ENCODE measurements at regions of chr3 and their contacts with region 1.

Region 1: DNA sequence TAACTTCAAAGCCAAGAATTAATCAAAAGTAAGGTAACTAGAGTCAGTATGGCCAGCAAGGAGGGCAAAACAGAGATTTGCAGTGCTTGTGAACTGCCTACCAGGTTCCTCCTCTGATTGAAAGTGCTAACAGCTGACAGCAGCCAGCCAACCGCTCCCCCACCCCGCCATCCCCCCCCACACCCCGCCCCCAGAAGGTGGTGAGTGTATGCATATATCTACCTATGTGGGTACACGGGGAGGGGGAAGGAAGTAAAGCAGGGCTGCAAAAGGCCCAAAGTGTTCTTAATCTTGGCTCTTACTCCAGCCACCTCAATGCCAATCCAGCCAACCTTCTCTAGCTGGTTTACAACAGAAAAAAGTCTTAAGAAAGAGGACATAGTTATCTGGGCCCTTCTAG is 50.7 kb downstream of the RAF1 start:
- DNase-seq: peak in 3 of 14 experiments; percentile 14 to 43 (median 15)
- ATAC-seq: peak; percentile 71
- H3K4me3 ChIP-seq: no peak overlapping the region
- H3K4me3 Mint-ChIP-seq: no peak overlapping the region
- H3K27ac ChIP-seq: no peak overlapping the region
- H3K27ac Mint-ChIP-seq: peak overlapping the region; percentile 27
- H3K4me1 ChIP-seq: no peaks in the 10 kb centered on the region
- H3K4me1 Mint-ChIP-seq: peaks cover 55% of the 10 kb centered on the region
- H3K27me3 ChIP-seq: no peaks in the 10 kb centered on the region
- H3K27me3 Mint-ChIP-seq: no peaks in the 10 kb centered on the region
- CTCF ChIP-seq: no peak

Region 2: DNA sequence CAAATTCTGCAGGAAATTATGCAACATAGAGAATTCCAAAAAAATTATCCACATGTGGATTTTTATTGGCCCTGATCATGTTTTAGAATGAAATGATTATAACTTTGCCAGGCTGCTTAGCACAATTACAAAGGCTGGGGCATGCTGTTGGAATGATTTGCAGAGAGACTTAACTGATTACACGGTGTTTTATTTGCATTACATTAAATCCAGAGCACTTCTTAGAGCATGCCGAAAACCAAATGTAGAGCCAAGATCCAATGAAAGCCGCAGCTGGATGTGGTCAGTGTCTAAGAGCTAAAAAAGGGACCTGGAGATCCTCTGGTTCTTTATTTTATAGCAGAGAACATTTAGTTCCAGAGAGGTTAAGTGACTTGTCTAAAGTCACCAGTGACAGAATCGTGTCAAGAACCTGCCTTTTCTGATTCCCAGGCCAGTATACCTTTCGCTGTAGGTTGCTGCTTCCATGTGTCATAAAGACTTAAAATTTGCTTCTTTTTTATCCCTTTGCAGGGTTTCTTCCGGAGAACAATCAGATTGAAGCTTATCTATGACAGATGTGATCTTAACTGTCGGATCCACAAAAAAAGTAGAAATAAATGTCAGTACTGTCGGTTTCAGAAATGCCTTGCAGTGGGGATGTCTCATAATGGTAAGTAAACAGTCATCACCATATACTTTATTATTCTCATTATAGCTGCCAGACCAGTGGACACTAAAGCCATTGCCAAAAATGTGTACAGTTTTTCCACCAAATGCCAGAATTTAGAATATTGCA is 221.0 kb before region 1 on chr3:
- CTCF ChIA-PET with region 1: no interaction called
- POLR2A ChIA-PET with region 1: no interaction called
- intact Hi-C with region 1: no loop called
- DNase-seq: no peak
- ATAC-seq: no peak
- H3K4me3 ChIP-seq: no peak overlapping the region
- H3K4me3 Mint-ChIP-seq: no peak overlapping the region
- H3K27ac ChIP-seq: no peak overlapping the region
- H3K27ac Mint-ChIP-seq: no peak overlapping the region
- H3K4me1 ChIP-seq: peaks cover 5% of the 10 kb centered on the region
- H3K4me1 Mint-ChIP-seq: peaks cover 6% of the 10 kb centered on the region
- H3K27me3 ChIP-seq: no peaks in the 10 kb centered on the region
- H3K27me3 Mint-ChIP-seq: no peaks in the 10 kb centered on the region
- CTCF ChIP-seq: no peak

Region 3: DNA sequence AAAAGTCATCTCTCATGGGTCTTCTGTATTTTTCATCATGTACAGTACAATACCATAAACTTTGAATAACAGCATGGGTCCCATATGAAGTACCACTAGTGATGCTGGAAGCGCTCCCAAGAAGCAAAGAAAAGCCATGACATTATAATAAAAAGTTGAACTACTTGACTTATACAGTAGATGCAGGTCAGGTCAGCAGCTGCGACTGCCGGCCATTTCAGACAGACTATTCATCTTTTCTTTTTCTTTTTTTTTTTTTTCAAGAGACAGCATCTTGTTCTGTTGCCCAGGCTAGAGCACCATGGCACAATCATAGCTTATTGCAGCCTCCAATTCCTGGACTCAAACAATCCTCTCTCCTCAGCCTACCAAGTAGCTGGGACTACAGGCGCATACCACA is 40.5 kb after region 1 on chr3:
- CTCF ChIA-PET with region 1: no interaction called
- POLR2A ChIA-PET with region 1: no interaction called
- intact Hi-C with region 1: loop called in 1 of 2 experiments (anchors 5 kb)
- DNase-seq: no peak
- ATAC-seq: no peak
- H3K4me3 ChIP-seq: no peak overlapping the region
- H3K4me3 Mint-ChIP-seq: no peak overlapping the region
- H3K27ac ChIP-seq: no peak overlapping the region
- H3K27ac Mint-ChIP-seq: peak overlapping the region; percentile 53
- H3K4me1 ChIP-seq: peaks cover 29% of the 10 kb centered on the region
- H3K4me1 Mint-ChIP-seq: peaks cover 70% of the 10 kb centered on the region
- H3K27me3 ChIP-seq: no peaks in the 10 kb centered on the region
- H3K27me3 Mint-ChIP-seq: no peaks in the 10 kb centered on the region
- CTCF ChIP-seq: no peak

Region 4: GRCh38 chr3:12768579-12769527 is 155.6 kb after region 1 on chr3:
- CTCF ChIA-PET with region 1: no interaction called
- POLR2A ChIA-PET with region 1: no interaction called
- intact Hi-C with region 1: no loop called
- DNase-seq: no peak
- ATAC-seq: no peak
- H3K4me3 ChIP-seq: no peak overlapping the region
- H3K4me3 Mint-ChIP-seq: no peak overlapping the region
- H3K27ac ChIP-seq: no peak overlapping the region
- H3K27ac Mint-ChIP-seq: no peak overlapping the region
- H3K4me1 ChIP-seq: no peaks in the 10 kb centered on the region
- H3K4me1 Mint-ChIP-seq: peaks cover 7% of the 10 kb centered on the region
- H3K27me3 ChIP-seq: no peaks in the 10 kb centered on the region
- H3K27me3 Mint-ChIP-seq: no peaks in the 10 kb centered on the region
- CTCF ChIP-seq: no peak